ENCODE measurements at regions of chr16 and their contacts with region 1.

Region 1: GRCh38 chr16:796296-797119 is 4.0 kb downstream of the GNG13 start:
- DNase-seq: no peak
- ATAC-seq: no peak
- H3K4me3 ChIP-seq: no peak overlapping the region
- H3K27ac ChIP-seq: no peak overlapping the region; the same call in 1 of the 2 replicates
- H3K4me1 ChIP-seq: peaks cover 33% of the 10 kb centered on the region
- H3K27me3 ChIP-seq: no peaks in the 10 kb centered on the region
- CTCF ChIP-seq: no peak

Region 2: GRCh38 chr16:777826-778225 is 18.7 kb before region 1 on chr16:
- CTCF ChIA-PET with region 1: no interaction called
- POLR2A ChIA-PET with region 1: no interaction called
- in situ Hi-C with region 1: no loop called
- intact Hi-C with region 1: no loop called
- DNase-seq: no peak
- ATAC-seq: peak; percentile 56
- H3K4me3 ChIP-seq: no peak overlapping the region
- H3K27ac ChIP-seq: peak overlapping the region; percentile 31; the same call in 1 of the 2 replicates
- H3K4me1 ChIP-seq: peaks cover 10% of the 10 kb centered on the region
- H3K27me3 ChIP-seq: no peaks in the 10 kb centered on the region
- CTCF ChIP-seq: no peak

Region 3: GRCh38 chr16:813204-813915 is 16.9 kb after region 1 on chr16:
- CTCF ChIA-PET with region 1: no interaction called
- POLR2A ChIA-PET with region 1: interaction called, 16 read pairs
- in situ Hi-C with region 1: no loop called
- intact Hi-C with region 1: no loop called
- DNase-seq: no peak
- ATAC-seq: peak; percentile 89
- H3K4me3 ChIP-seq: peak overlapping the region; percentile 34 to 41
- H3K27ac ChIP-seq: no peak overlapping the region
- H3K4me1 ChIP-seq: peaks cover 7% of the 10 kb centered on the region; the same call in 1 of the 2 replicates
- H3K27me3 ChIP-seq: no peaks in the 10 kb centered on the region
- CTCF ChIP-seq: peak; percentile 90

Measured in Panc1 (cell line).